H1 (cell line): ENCODE measurements at regions of chr7 and their contacts with region 1.

Region 1: GRCh38 chr7:66894463-66895080 is 26.5 kb upstream of the TMEM248 start:
- DNase-seq: peak; percentile 39 to 61
- H3K4me3 ChIP-seq: no peak overlapping the region
- H3K27ac ChIP-seq: no peak overlapping the region
- H3K4me1 ChIP-seq: no peaks in the 10 kb centered on the region
- H3K27me3 ChIP-seq: no peaks in the 10 kb centered on the region
- CTCF ChIP-seq: peak; percentile 19 to 39 (median 21)
- EP300 ChIP-seq: no peak
- POLR2A ChIP-seq: no peak
- RAD21 ChIP-seq: peak; percentile 61

Region 2: DNA sequence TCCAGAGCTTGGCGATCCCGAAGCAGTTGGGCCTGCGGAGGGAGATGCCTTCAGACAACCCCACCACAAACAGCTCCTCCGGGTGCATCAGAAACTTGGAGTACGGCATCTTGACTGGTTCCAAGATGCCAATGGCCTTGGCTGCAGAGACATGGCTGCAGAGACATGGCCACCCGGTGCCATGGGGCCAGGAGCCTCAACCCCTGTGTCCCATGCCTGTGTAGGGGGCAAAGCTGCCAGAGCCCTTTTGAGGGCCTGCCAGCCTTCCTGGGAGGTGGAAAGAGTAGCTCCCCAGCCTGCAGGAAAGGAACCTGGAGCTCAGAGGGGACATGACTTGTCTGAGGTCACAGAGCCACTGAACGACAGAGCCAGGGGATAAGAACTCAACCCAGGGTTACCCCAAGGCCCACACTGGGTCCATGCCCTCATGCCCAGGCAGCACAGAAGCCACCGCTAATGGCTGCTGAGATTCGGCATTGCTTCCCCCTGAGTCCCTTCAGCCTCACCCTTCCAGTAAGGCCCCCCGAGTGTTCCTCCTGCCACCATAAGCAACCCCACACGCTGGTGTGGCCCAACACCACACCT is 70.4 kb before region 1 on chr7:
- CTCF ChIA-PET with region 1: interaction called, 12 read pairs
- POLR2A ChIA-PET with region 1: interaction called, 4 read pairs
- DNase-seq: no peak
- H3K4me3 ChIP-seq: no peak overlapping the region
- H3K27ac ChIP-seq: no peak overlapping the region
- H3K4me1 ChIP-seq: no peaks in the 10 kb centered on the region
- H3K27me3 ChIP-seq: no peaks in the 10 kb centered on the region
- CTCF ChIP-seq: no peak
- EP300 ChIP-seq: no peak
- POLR2A ChIP-seq: no peak
- RAD21 ChIP-seq: no peak

Region 3: DNA sequence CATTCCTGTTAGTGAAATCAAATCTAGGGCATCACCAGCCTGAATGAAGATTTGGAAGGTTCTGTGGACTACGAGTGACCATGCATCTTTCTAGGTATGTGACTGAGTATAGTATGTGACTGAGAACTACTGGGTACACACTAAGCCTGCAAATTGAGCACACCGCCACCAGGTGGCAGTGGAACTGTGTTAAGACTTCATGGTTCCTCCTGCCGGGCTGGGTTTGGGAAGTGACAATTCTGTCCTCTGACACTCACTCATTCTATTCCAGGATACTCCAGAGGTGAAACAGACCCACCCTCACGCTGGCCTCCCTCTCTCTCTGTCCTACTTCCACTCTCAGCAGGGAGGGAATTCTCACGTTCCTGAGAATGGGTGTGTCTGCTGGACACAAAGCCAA is 57.6 kb before region 1 on chr7:
- CTCF ChIA-PET with region 1: interaction called, 15 read pairs
- POLR2A ChIA-PET with region 1: interaction called, 4 read pairs
- DNase-seq: peak; percentile 50 to 79
- H3K4me3 ChIP-seq: no peak overlapping the region
- H3K27ac ChIP-seq: no peak overlapping the region
- H3K4me1 ChIP-seq: no peaks in the 10 kb centered on the region
- H3K27me3 ChIP-seq: no peaks in the 10 kb centered on the region
- CTCF ChIP-seq: peak; percentile 64 to 84 (median 72)
- EP300 ChIP-seq: no peak
- POLR2A ChIP-seq: no peak
- RAD21 ChIP-seq: peak; percentile 81 to 82

Region 4: DNA sequence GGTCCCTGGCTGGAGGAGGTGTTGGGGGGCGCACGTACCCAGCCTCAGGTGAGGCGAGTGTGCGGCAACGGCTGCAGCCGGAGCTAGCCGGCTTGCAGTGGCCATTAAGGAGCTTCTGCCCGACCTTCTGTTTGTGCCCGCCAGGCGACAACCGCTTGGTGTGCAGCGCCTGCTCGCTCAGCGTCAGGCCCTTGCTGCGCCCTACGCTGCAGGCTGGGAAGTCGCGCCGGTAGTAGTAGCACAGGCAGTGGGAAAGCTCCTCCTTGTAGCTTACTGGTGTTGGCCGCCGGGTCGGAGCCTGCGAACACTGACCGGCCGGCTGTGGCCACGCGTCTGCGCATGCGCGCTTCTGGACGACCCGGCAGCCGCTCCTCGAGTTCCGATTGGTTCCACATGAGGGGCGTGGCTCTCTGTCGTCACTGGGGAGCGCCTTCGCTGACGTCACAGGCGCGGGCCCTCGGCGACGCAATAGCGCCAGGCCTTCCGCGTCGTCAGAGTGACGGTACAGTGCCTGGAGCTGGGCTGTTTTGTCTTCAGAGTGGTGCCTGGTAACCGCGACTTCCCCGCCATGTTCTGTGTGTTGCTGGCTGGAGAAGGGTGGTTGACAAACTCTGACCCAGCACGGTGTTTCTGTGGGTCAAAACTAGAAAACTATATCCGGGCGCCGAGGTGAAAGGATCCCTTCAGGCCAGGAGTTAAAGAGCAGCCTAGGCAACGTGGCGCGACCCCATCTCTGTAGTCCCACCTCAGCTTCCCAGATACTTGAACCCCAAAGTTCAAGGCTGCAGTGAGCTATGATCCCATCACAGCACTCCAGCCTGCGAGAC is 49.8 kb before region 1 on chr7:
- CTCF ChIA-PET with region 1: interaction called, 22 read pairs
- POLR2A ChIA-PET with region 1: interaction called, 7 read pairs
- DNase-seq: peak; percentile 95 to 100
- H3K4me3 ChIP-seq: peak overlapping the region; percentile 73 to 94 (median 83)
- H3K27ac ChIP-seq: peak overlapping the region; percentile 97
- H3K4me1 ChIP-seq: peaks cover 2 to 26% (median 11%) of the 10 kb centered on the region in 4 experiments; a peak in 6 of 7 replicates
- H3K27me3 ChIP-seq: no peaks in the 10 kb centered on the region
- CTCF ChIP-seq: peak in 1 of 3 experiments; percentile 17; a peak in 1 of 4 replicates
- EP300 ChIP-seq: peak in 1 of 2 experiments; percentile 82; a peak in 1 of 3 replicates
- POLR2A ChIP-seq: peak; percentile 85 to 96
- RAD21 ChIP-seq: peak in 1 of 2 experiments; percentile 4; a peak in 2 of 4 replicates

Region 5: GRCh38 chr7:66883716-66884115 is 10.9 kb before region 1 on chr7:
- CTCF ChIA-PET with region 1: interaction called, 11 read pairs
- POLR2A ChIA-PET with region 1: no interaction called
- DNase-seq: no peak
- H3K4me3 ChIP-seq: no peak overlapping the region
- H3K27ac ChIP-seq: no peak overlapping the region
- H3K4me1 ChIP-seq: no peaks in the 10 kb centered on the region
- H3K27me3 ChIP-seq: no peaks in the 10 kb centered on the region
- CTCF ChIP-seq: no peak
- EP300 ChIP-seq: no peak
- POLR2A ChIP-seq: no peak
- RAD21 ChIP-seq: no peak

Region 6: DNA sequence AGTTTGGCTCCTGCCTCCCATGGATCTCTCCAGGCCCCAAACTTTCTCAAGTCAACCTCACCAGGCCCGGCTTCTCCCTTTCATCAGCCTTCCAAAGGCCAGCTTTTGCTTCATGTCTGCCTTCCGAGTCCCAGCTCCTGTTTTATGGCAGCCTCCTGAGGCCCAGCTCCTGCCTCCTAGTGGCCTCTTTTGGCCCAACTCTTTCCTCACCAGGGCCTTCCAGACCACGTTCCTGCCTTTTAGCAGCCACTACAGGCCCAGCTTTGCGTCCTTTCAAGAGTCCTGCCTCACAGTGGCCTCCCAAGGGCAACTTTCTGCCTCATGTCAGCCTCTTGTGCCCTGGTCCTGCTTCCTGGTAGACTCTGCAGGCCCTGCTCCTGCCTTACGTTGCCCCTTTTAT is 11.1 kb after region 1 on chr7:
- CTCF ChIA-PET with region 1: interaction called, 36 read pairs
- POLR2A ChIA-PET with region 1: interaction called, 10 read pairs
- DNase-seq: peak in 1 of 2 experiments; percentile 56
- H3K4me3 ChIP-seq: no peak overlapping the region
- H3K27ac ChIP-seq: peak overlapping the region; percentile 5; the same call in 1 of the 2 replicates
- H3K4me1 ChIP-seq: no peaks in the 10 kb centered on the region
- H3K27me3 ChIP-seq: no peaks in the 10 kb centered on the region
- CTCF ChIP-seq: peak; percentile 45 to 68 (median 59)
- EP300 ChIP-seq: no peak
- POLR2A ChIP-seq: no peak
- RAD21 ChIP-seq: peak; percentile 49 to 51

Region 7: GRCh38 chr7:66920769-66921395 is 26.3 kb after region 1 on chr7 and contains the start of gene TMEM248:
- CTCF ChIA-PET with region 1: no interaction called
- POLR2A ChIA-PET with region 1: no interaction called
- DNase-seq: peak in 1 of 2 experiments; percentile 84
- H3K4me3 ChIP-seq: peak within 1 kb of the TSS; percentile 58 to 97 (median 96)
- H3K27ac ChIP-seq: peak within 1 kb of the TSS; percentile 41; the same call in 1 of the 2 replicates
- H3K4me1 ChIP-seq: peaks cover 0 to 12% (median 3%) of the 10 kb centered on the region in 4 experiments; a peak in 3 of 7 replicates
- H3K27me3 ChIP-seq: no peaks in the 10 kb centered on the region
- CTCF ChIP-seq: no peak
- EP300 ChIP-seq: no peak
- POLR2A ChIP-seq: peak in 1 of 2 experiments; percentile 55; a peak in 1 of 3 replicates
- RAD21 ChIP-seq: no peak
- total RNA-seq, gene TMEM248: 60.9 and 63.6 TPM in 2 replicates